ENCODE measurements at regions of chr15 and their contacts with region 1.

Region 1: GRCh38 chr15:31236184-31237042 is 90.2 kb upstream of the KLF13 start:
- DNase-seq: no peak
- ATAC-seq: no peak
- H3K4me3 Mint-ChIP-seq: no peak overlapping the region
- H3K27ac Mint-ChIP-seq: no peak overlapping the region
- H3K4me1 Mint-ChIP-seq: peaks cover 18% of the 10 kb centered on the region
- H3K27me3 Mint-ChIP-seq: no peaks in the 10 kb centered on the region

Region 2: GRCh38 chr15:31292391-31293015 is 56.1 kb after region 1 on chr15:
- CTCF ChIA-PET with region 1: no interaction called
- POLR2A ChIA-PET with region 1: no interaction called
- intact Hi-C with region 1: loop called in 1 of 2 experiments (anchors 5 kb)
- DNase-seq: no peak
- ATAC-seq: no peak
- H3K4me3 Mint-ChIP-seq: no peak overlapping the region
- H3K27ac Mint-ChIP-seq: no peak overlapping the region
- H3K4me1 Mint-ChIP-seq: no peaks in the 10 kb centered on the region
- H3K27me3 Mint-ChIP-seq: no peaks in the 10 kb centered on the region

Region 3: DNA sequence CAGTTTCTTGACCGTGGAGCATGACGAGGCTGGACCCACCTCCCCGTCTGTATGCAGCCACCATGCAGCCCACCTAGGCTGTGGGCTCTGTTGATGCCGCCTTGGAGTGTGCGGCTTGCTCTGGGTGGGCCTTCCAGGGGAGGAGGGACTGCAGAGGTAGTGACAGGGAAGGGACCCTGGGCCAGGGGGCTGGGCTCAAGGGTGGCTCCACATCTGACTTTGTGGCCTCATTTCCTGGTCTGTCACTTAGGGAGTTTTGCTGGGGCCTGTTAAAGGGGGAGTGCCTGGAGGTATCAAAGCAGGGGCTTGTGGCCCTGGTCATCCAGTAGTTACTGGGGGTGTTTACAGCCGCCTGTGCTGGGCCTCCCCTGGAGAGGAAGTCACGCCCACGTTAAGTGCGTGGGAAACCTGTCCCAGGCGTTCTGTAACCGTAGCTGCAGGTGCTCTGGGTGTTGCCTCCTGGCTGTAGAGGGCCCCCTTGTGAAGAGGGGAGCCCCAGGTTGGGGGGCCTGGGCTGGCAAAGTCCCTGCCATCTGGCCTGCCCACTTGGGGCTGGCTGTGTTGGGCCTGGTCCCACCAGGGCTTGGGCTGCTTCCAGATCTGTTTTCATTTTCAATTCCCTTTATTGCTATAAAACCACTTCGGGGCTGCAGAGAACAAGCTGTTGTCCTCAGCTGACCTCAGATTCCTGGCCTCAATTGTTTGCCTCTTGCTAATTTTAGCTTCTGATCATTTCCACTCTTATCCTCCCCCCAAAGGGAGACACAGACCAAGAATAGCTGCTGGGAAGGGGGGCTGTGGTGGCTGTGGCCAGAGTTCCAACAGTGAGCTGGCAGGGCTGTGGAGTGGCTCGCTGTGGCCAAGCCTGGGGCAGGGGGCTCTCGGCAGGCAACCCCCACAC is 116.7 kb after region 1 on chr15:
- CTCF ChIA-PET with region 1: no interaction called
- POLR2A ChIA-PET with region 1: no interaction called
- intact Hi-C with region 1: no loop called
- DNase-seq: peak; percentile 74
- ATAC-seq: peak; percentile 27
- H3K4me3 Mint-ChIP-seq: peak overlapping the region; percentile 62
- H3K27ac Mint-ChIP-seq: peak overlapping the region; percentile 98
- H3K4me1 Mint-ChIP-seq: peaks cover 99% of the 10 kb centered on the region
- H3K27me3 Mint-ChIP-seq: no peaks in the 10 kb centered on the region

Region 4: GRCh38 chr15:31379042-31379441 is 142.6 kb after region 1 on chr15:
- CTCF ChIA-PET with region 1: no interaction called
- POLR2A ChIA-PET with region 1: no interaction called
- intact Hi-C with region 1: no loop called
- DNase-seq: peak; percentile 58
- ATAC-seq: peak; percentile 74
- H3K4me3 Mint-ChIP-seq: no peak overlapping the region
- H3K27ac Mint-ChIP-seq: peak overlapping the region; percentile 80
- H3K4me1 Mint-ChIP-seq: peaks cover 49% of the 10 kb centered on the region
- H3K27me3 Mint-ChIP-seq: no peaks in the 10 kb centered on the region